Calu3 (cell line): ENCODE measurements at regions of chr5 and their contacts with region 1.

Region 1: GRCh38 chr5:8842971-8843551 is 702.8 kb downstream of the SEMA5A start:
- DNase-seq: peak; percentile 6
- H3K4me3 Mint-ChIP-seq: no peak overlapping the region
- H3K27ac Mint-ChIP-seq: no peak overlapping the region
- H3K4me1 Mint-ChIP-seq: no peaks in the 10 kb centered on the region
- H3K27me3 Mint-ChIP-seq: no peaks in the 10 kb centered on the region
- CTCF ChIP-seq: no peak

Region 2: DNA sequence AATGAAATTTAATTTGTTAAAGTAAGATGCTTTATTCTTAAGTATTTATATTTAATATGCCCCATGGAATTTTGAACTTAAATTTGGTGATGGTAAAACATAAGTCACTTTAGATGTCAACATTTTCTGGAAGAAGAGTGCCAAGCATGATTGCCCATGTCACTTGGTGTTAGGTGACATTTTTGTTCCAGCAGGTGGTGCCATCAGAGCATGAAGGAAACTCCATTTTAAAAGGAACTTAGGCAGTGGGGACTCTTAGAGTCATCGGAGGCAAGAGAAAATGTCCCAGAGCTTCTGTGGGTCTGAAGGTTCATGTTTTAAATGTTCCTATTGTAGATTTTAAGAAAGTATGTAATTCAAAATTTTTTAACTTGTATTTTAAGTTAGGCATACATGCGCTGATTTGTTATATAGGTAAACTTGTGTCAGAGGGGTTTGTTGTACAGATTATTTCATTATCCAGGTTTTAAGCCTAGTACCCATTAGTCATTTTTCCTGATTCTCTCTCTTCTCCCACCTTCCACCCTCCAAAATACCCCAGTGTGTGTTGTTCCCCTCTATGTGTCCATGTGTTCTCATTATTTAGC is 86.5 kb before region 1 on chr5:
- CTCF ChIA-PET with region 1: interaction called, 4 read pairs
- intact Hi-C with region 1: loop called (anchors 2 kb)
- DNase-seq: peak; percentile 9
- H3K4me3 Mint-ChIP-seq: no peak overlapping the region
- H3K27ac Mint-ChIP-seq: no peak overlapping the region
- H3K4me1 Mint-ChIP-seq: no peaks in the 10 kb centered on the region
- H3K27me3 Mint-ChIP-seq: no peaks in the 10 kb centered on the region
- CTCF ChIP-seq: no peak

Region 3: GRCh38 chr5:8864053-8864452 is 21.0 kb after region 1 on chr5:
- CTCF ChIA-PET with region 1: no interaction called
- intact Hi-C with region 1: no loop called
- DNase-seq: peak; percentile 18
- H3K4me3 Mint-ChIP-seq: no peak overlapping the region
- H3K27ac Mint-ChIP-seq: no peak overlapping the region
- H3K4me1 Mint-ChIP-seq: no peaks in the 10 kb centered on the region
- H3K27me3 Mint-ChIP-seq: no peaks in the 10 kb centered on the region
- CTCF ChIP-seq: no peak